Natural killer cell (primary cell): ENCODE measurements at regions of chr2 and their contacts with region 1.

Region 1: DNA sequence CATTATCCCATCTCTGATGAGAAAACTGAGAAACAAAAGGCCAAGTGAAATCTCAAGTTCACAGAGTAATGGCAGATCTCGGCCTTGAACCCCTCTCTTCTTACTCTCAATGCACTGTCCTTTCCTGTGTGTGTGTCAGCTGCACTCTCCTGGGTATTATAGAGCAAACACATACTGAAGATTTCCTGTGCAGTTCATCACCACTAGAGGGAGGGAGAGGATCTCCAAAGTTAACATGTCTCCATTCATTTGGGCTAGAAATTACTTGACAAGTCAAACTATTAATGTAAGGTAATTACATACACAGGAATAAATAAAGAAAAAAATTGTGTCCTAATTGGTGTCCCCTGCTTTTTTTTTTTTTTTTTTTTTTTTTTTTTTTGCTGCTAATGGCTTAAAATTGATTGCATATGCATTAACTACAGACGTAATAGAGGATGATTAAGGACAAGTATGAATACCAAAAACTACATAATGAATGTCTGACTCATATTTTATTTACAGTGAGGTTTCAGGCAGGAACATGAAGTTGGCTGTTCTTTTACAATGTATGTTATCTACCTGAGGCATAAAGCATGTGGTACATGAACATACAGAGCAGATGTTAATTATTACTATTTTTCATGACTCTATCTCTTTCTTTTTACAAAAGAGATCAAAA is 269.2 kb downstream of the NYAP2 start:
- DNase-seq: peak in 1 of 2 donors; percentile 70
- ATAC-seq: peak; percentile 67 to 73 (median 68)
- H3K4me3 ChIP-seq: no peak overlapping the region
- H3K4me3 Mint-ChIP-seq: no peak overlapping the region
- H3K27ac ChIP-seq: no peak overlapping the region
- H3K27ac Mint-ChIP-seq: no peak overlapping the region
- H3K4me1 ChIP-seq: no peaks in the 10 kb centered on the region
- H3K4me1 Mint-ChIP-seq: no peaks in the 10 kb centered on the region
- H3K27me3 ChIP-seq: no peaks in the 10 kb centered on the region
- H3K27me3 Mint-ChIP-seq: peaks cover 7 to 20% of the 10 kb centered on the region in 2 donors
- CTCF ChIP-seq: peak; percentile 52

Region 2: GRCh38 chr2:225779829-225780228 is 111.1 kb after region 1 on chr2:
- intact Hi-C with region 1: no loop called
- DNase-seq: no peak
- ATAC-seq: no peak
- H3K4me3 ChIP-seq: no peak overlapping the region
- H3K4me3 Mint-ChIP-seq: no peak overlapping the region
- H3K27ac ChIP-seq: no peak overlapping the region
- H3K27ac Mint-ChIP-seq: no peak overlapping the region
- H3K4me1 ChIP-seq: no peaks in the 10 kb centered on the region
- H3K4me1 Mint-ChIP-seq: no peaks in the 10 kb centered on the region
- H3K27me3 ChIP-seq: no peaks in the 10 kb centered on the region
- H3K27me3 Mint-ChIP-seq: no peaks in the 10 kb centered on the region
- CTCF ChIP-seq: no peak

Region 3: GRCh38 chr2:226287930-226288329 is 619.2 kb after region 1 on chr2:
- intact Hi-C with region 1: no loop called
- DNase-seq: no peak
- ATAC-seq: no peak
- H3K4me3 ChIP-seq: no peak overlapping the region
- H3K4me3 Mint-ChIP-seq: no peak overlapping the region
- H3K27ac ChIP-seq: no peak overlapping the region
- H3K27ac Mint-ChIP-seq: no peak overlapping the region
- H3K4me1 ChIP-seq: no peaks in the 10 kb centered on the region
- H3K4me1 Mint-ChIP-seq: no peaks in the 10 kb centered on the region
- H3K27me3 ChIP-seq: no peaks in the 10 kb centered on the region
- H3K27me3 Mint-ChIP-seq: no peaks in the 10 kb centered on the region
- CTCF ChIP-seq: no peak

Region 4: GRCh38 chr2:226802573-226802972 is 1133.8 kb after region 1 on chr2:
- intact Hi-C with region 1: loop called (anchors 1 kb)
- DNase-seq: peak in 1 of 2 donors; percentile 86
- ATAC-seq: peak; percentile 42 to 50 (median 42)
- H3K4me3 ChIP-seq: no peak overlapping the region
- H3K4me3 Mint-ChIP-seq: no peak overlapping the region
- H3K27ac ChIP-seq: no peak overlapping the region
- H3K27ac Mint-ChIP-seq: no peak overlapping the region
- H3K4me1 ChIP-seq: peaks cover 32% of the 10 kb centered on the region
- H3K4me1 Mint-ChIP-seq: peaks cover 9 to 19% of the 10 kb centered on the region in 2 donors
- H3K27me3 ChIP-seq: peaks cover 36% of the 10 kb centered on the region
- H3K27me3 Mint-ChIP-seq: peaks cover 39 to 54% of the 10 kb centered on the region in 2 donors
- CTCF ChIP-seq: peak; percentile 85

Region 5: GRCh38 chr2:227238238-227239237 is 1569.8 kb after region 1 on chr2:
- intact Hi-C with region 1: loop called (anchors 5 kb)
- DNase-seq: peak; percentile 43 to 72
- ATAC-seq: peak in 1 of 3 donors; percentile 62
- H3K4me3 ChIP-seq: no peak overlapping the region
- H3K4me3 Mint-ChIP-seq: no peak overlapping the region
- H3K27ac ChIP-seq: no peak overlapping the region
- H3K27ac Mint-ChIP-seq: no peak overlapping the region
- H3K4me1 ChIP-seq: no peaks in the 10 kb centered on the region
- H3K4me1 Mint-ChIP-seq: no peaks in the 10 kb centered on the region
- H3K27me3 ChIP-seq: no peaks in the 10 kb centered on the region
- H3K27me3 Mint-ChIP-seq: peaks cover 11 to 16% of the 10 kb centered on the region in 2 donors
- CTCF ChIP-seq: peak; percentile 96